ENCODE measurements at regions of chr3 and their contacts with region 1.

Region 1: DNA sequence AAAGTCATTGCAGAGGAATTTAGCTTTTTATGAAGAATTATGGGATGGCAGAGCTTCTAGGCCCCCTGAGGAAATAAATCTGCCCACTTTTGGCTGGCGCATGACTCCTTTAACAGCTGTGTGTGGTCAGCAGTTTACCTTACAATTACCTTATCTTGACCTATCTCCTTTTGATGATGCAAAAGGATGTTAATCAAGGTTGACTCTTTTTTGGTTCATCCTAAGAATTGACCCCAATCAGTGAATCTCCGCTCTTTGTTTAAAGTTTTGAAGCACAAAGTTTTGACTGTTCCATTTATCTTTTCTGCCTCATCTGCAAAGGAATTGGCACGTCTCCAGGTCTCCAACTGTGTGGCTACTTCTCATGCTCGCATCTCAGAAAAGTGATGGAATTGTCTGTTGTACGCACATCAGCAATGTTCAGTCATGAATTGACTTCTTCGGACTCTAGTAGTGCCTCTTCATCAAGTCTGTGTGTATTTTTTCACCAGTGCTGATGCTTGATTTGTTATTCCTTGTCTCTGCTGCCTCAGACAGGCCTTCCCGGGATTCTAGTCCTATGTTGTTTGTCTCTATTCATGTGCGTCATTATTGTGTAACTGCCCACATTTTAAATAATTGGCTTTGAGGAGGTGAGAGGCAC is 196.2 kb upstream of the CFAP20DC start:
- DNase-seq: no peak
- ATAC-seq: no peak
- H3K4me3 ChIP-seq: no peak overlapping the region
- H3K27ac ChIP-seq: peak overlapping the region; percentile 25; the same call in 1 of the 2 replicates
- H3K4me1 ChIP-seq: peaks cover 18% of the 10 kb centered on the region
- H3K27me3 ChIP-seq: no peaks in the 10 kb centered on the region
- CTCF ChIP-seq: no peak
- EP300 ChIP-seq: no peak
- POLR2A ChIP-seq: no peak
- RAD21 ChIP-seq: no peak

Region 2: GRCh38 chr3:59153648-59154047 is 92.3 kb before region 1 on chr3:
- CTCF ChIA-PET with region 1: no interaction called
- POLR2A ChIA-PET with region 1: no interaction called
- RAD21 ChIA-PET with region 1: no interaction called
- SMC1A ChIA-PET with region 1: no interaction called
- in situ Hi-C with region 1: no loop called
- intact Hi-C with region 1: no loop called
- DNase-seq: no peak
- ATAC-seq: no peak
- H3K4me3 ChIP-seq: no peak overlapping the region
- H3K27ac ChIP-seq: no peak overlapping the region
- H3K4me1 ChIP-seq: no peaks in the 10 kb centered on the region
- H3K27me3 ChIP-seq: no peaks in the 10 kb centered on the region
- CTCF ChIP-seq: no peak
- EP300 ChIP-seq: no peak
- POLR2A ChIP-seq: no peak
- RAD21 ChIP-seq: no peak

Region 3: GRCh38 chr3:59235634-59236012 is 10.4 kb before region 1 on chr3:
- CTCF ChIA-PET with region 1: interaction called, 22 read pairs
- POLR2A ChIA-PET with region 1: interaction called, 35 read pairs
- RAD21 ChIA-PET with region 1: interaction called, 77 read pairs
- SMC1A ChIA-PET with region 1: interaction called, 102 read pairs
- in situ Hi-C with region 1: no loop called
- intact Hi-C with region 1: loop called (anchors 1 kb)
- DNase-seq: peak; percentile 46
- ATAC-seq: peak; percentile 94
- H3K4me3 ChIP-seq: no peak overlapping the region
- H3K27ac ChIP-seq: no peak overlapping the region
- H3K4me1 ChIP-seq: peaks cover 3% of the 10 kb centered on the region
- H3K27me3 ChIP-seq: no peaks in the 10 kb centered on the region
- CTCF ChIP-seq: no peak
- EP300 ChIP-seq: peak; percentile 56 to 81; a peak in 3 of 4 replicates
- POLR2A ChIP-seq: no peak
- RAD21 ChIP-seq: no peak

Region 4: GRCh38 chr3:59262076-59262498 is 16.1 kb after region 1 on chr3:
- CTCF ChIA-PET with region 1: interaction called, 12 read pairs
- POLR2A ChIA-PET with region 1: interaction called, 3 read pairs
- RAD21 ChIA-PET with region 1: interaction called, 30 read pairs
- SMC1A ChIA-PET with region 1: interaction called, 42 read pairs
- in situ Hi-C with region 1: no loop called
- intact Hi-C with region 1: no loop called
- DNase-seq: peak; percentile 69
- ATAC-seq: peak; percentile 95
- H3K4me3 ChIP-seq: no peak overlapping the region
- H3K27ac ChIP-seq: no peak overlapping the region
- H3K4me1 ChIP-seq: peaks cover 3% of the 10 kb centered on the region; the same call in 1 of the 2 replicates
- H3K27me3 ChIP-seq: no peaks in the 10 kb centered on the region
- CTCF ChIP-seq: no peak
- EP300 ChIP-seq: peak in 1 of 2 experiments; percentile 47; a peak in 1 of 4 replicates
- POLR2A ChIP-seq: no peak
- RAD21 ChIP-seq: no peak